ENCODE measurements at regions of chr1 and their contacts with region 1.

Region 1: GRCh38 chr1:12658531-12659453 is 14.9 kb downstream of the AADACL4 start:
- DNase-seq: peak; percentile 82
- H3K4me3 ChIP-seq: no peak overlapping the region
- H3K27ac ChIP-seq: no peak overlapping the region
- H3K4me1 ChIP-seq: no peaks in the 10 kb centered on the region
- H3K27me3 ChIP-seq: no peaks in the 10 kb centered on the region
- CTCF ChIP-seq: peak; percentile 90

Region 2: DNA sequence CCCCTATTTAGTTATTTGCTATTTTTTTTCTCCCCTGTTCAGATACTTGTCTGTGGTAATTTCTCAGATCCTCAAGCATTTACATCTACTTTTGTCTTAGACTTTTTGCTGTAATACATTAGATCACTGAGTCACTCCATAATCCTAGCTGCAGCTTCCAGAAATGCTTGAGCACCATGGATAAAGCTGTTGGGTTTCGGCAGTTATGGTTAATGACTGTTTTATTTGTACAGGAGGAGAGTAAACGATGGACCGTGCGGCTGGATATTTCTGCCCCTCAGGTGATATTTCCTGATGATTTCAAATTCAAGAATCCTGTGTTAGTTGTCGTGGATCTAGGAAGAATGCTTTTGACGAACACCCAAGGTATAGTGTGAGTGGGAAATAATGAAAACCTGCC is 386.0 kb before region 1 on chr1:
- intact Hi-C with region 1: loop called (anchors 5 kb)
- DNase-seq: no peak
- H3K4me3 ChIP-seq: no peak overlapping the region
- H3K27ac ChIP-seq: no peak overlapping the region
- H3K4me1 ChIP-seq: no peaks in the 10 kb centered on the region
- H3K27me3 ChIP-seq: no peaks in the 10 kb centered on the region
- CTCF ChIP-seq: no peak

Region 3: GRCh38 chr1:12314333-12314903 is 344.4 kb before region 1 on chr1:
- intact Hi-C with region 1: loop called (anchors 10 kb)
- DNase-seq: no peak
- H3K4me3 ChIP-seq: no peak overlapping the region
- H3K27ac ChIP-seq: no peak overlapping the region
- H3K4me1 ChIP-seq: no peaks in the 10 kb centered on the region
- H3K27me3 ChIP-seq: no peaks in the 10 kb centered on the region
- CTCF ChIP-seq: peak; percentile 23

Region 4: DNA sequence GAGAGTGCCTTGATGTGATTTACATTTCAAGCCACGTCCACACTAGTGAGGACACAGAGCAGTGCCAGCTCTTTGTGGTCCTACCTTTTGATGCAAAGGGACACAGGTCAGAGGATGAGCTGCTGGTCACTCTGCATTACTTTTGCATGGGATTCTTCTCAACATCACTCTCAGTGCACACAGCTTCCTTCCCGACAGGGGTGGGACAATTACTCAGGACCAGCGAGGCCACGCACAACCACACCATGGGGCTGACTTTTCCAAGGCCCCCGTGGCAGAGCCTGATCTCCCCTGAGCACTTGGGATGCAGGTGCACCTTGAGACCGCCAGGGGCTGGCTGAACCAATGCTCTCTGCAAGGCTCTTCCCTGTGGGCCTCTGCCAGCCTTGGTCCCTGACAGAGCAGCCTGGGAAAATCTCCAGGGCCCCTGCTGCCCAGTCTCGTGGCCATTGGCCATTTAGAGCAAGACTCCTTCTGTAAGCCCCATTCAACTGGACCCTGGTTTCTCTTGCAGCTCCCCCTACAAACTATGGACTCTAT is 101.5 kb after region 1 on chr1:
- intact Hi-C with region 1: no loop called
- DNase-seq: no peak
- H3K4me3 ChIP-seq: no peak overlapping the region
- H3K27ac ChIP-seq: no peak overlapping the region
- H3K4me1 ChIP-seq: no peaks in the 10 kb centered on the region
- H3K27me3 ChIP-seq: no peaks in the 10 kb centered on the region
- CTCF ChIP-seq: no peak